Common myeloid progenitor, CD34-positive (primary cell): ENCODE measurements at regions of chr13 and their contacts with region 1.

Region 1: GRCh38 chr13:20869542-20869941 is 33.0 kb downstream of the XPO4 start:
- DNase-seq: peak; percentile 14 to 42 (median 36)
- H3K4me3 ChIP-seq: no peak overlapping the region
- H3K27ac ChIP-seq: no peak overlapping the region
- H3K4me1 ChIP-seq: no peaks in the 10 kb centered on the region
- H3K27me3 ChIP-seq: no peaks in the 10 kb centered on the region

Region 2: DNA sequence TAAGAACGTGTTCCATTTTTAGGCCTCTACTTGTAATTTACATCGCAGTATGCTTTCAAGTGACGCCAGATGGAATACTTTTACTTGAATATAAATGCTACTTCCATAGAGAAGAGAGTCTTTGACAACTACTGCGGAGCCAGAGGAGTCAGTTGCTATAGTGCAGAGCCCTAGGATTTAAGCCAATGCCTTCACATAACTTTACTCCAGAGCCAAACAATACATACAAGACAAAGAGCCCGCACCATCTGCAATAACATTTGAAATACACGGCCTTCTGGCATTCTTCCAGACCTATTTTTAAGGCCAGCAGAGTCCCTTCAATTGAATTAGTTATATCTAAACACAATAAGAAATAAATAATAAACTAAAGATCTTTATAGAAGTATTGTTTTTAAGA is 26.4 kb before region 1 on chr13:
- CTCF ChIA-PET with region 1: no interaction called
- POLR2A ChIA-PET with region 1: no interaction called
- DNase-seq: no peak
- H3K4me3 ChIP-seq: no peak overlapping the region
- H3K27ac ChIP-seq: no peak overlapping the region
- H3K4me1 ChIP-seq: no peaks in the 10 kb centered on the region
- H3K27me3 ChIP-seq: no peaks in the 10 kb centered on the region

Region 3: GRCh38 chr13:21075011-21075898 is 205.7 kb after region 1 on chr13:
- CTCF ChIA-PET with region 1: no interaction called
- POLR2A ChIA-PET with region 1: no interaction called
- DNase-seq: peak; percentile 95 to 100 (median 99)
- H3K4me3 ChIP-seq: peak overlapping the region; percentile 50 to 84 (median 70)
- H3K27ac ChIP-seq: peak overlapping the region; percentile 94 to 97
- H3K4me1 ChIP-seq: peaks cover 8 to 66% (median 51%) of the 10 kb centered on the region in 4 experiments
- H3K27me3 ChIP-seq: no peaks in the 10 kb centered on the region

Region 4: GRCh38 chr13:21171420-21171819 is 301.9 kb after region 1 on chr13:
- CTCF ChIA-PET with region 1: interaction called, 4 read pairs
- POLR2A ChIA-PET with region 1: interaction called, 10 read pairs
- DNase-seq: no peak
- H3K4me3 ChIP-seq: no peak overlapping the region
- H3K27ac ChIP-seq: no peak overlapping the region
- H3K4me1 ChIP-seq: peaks cover 2 to 15% (median 9%) of the 10 kb centered on the region in 4 experiments
- H3K27me3 ChIP-seq: no peaks in the 10 kb centered on the region